Activated CD4-positive, alpha-beta T cell treated with anti-CD3 and anti-CD28 coated beads for 36 hours (primary cell): ENCODE measurements at regions of chr19 and their contacts with region 1.

Region 1: DNA sequence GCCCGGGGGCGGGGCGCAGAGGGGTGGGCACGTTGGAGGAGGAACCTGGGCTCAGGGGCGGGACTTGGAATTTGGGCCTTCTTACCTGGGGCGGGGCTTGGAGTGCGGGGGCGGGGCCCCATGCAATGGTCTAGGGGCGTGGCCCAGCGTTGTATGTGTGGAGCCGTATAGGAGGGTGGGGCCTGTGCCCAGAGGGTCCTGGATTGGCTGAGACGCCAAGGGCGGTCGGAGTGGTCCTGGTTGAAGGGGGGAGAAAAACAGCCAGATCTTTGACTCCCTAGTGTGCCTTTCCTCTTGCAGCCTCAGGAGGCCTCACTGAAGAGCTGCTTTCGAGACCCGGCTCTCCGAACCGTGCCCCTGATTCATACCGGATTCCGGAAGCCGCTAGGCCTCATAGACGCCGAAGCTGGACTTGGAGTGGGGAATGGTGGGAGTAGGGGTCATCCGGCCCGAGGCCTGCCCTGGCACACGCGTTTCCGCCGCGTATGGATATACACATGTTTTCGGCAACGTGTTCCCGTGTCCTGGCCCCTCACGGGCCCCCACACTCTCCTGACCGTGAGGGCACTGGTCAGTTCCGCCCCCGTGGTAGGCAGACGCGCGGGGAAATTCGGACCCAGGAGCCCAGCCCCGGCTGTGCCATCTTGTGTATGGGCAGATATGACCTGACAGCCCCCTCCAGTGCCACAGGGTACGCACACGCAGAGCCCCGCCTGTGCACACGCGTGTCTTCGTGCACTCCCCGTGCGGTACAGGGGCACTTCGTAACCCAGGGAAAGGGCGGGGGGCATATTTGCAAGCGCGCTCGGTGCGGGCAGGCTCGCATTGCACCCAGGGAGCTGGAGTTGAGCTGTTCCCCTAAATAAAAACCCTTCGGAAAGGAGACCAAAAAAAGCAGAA is 661 bp upstream of the PRR12 start:
- DNase-seq: peak; percentile 98
- ATAC-seq: peak; percentile 80
- H3K4me3 Mint-ChIP-seq: peak overlapping the region; percentile 79
- H3K27ac Mint-ChIP-seq: peak overlapping the region; percentile 84
- H3K4me1 Mint-ChIP-seq: peaks cover 28% of the 10 kb centered on the region
- H3K27me3 Mint-ChIP-seq: no peaks in the 10 kb centered on the region

Region 2: DNA sequence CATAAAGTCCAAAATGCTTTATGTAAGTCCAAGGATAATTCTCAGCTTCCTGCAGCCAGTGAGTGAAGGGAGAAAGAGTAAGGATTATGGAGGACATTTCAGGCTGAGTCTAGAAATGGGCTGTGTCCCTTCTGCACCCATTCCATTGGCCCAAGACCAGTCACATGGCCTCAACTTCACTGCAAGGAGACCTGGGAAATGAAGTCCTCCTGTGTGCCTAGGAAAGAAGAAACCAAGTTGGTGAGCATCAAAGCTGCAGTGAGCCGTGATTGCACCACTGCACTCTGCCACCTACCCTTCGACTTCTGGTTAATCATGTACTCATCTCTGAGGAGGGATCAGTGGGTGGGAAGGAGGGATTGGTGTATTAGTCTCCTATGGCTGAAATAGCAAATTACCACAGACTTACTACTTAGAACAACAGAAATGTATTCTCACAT is 258.7 kb before region 1 on chr19:
- CTCF ChIA-PET with region 1: no interaction called
- POLR2A ChIA-PET with region 1: no interaction called
- intact Hi-C with region 1: loop called in 1 of 2 experiments (anchors 5 kb)
- DNase-seq: peak; percentile 80
- ATAC-seq: peak; percentile 80
- H3K4me3 Mint-ChIP-seq: peak overlapping the region; percentile 33
- H3K27ac Mint-ChIP-seq: peak overlapping the region; percentile 75
- H3K4me1 Mint-ChIP-seq: peaks cover 81% of the 10 kb centered on the region
- H3K27me3 Mint-ChIP-seq: no peaks in the 10 kb centered on the region

Region 3: GRCh38 chr19:49555600-49556411 is 34.5 kb before region 1 on chr19:
- CTCF ChIA-PET with region 1: interaction called, 4 read pairs
- POLR2A ChIA-PET with region 1: interaction called, 4 read pairs
- intact Hi-C with region 1: loop called in 1 of 2 experiments (anchors 1 kb)
- DNase-seq: peak; percentile 92
- ATAC-seq: peak; percentile 62
- H3K4me3 Mint-ChIP-seq: peak overlapping the region; percentile 35
- H3K27ac Mint-ChIP-seq: peak overlapping the region; percentile 98
- H3K4me1 Mint-ChIP-seq: peaks cover 82% of the 10 kb centered on the region
- H3K27me3 Mint-ChIP-seq: no peaks in the 10 kb centered on the region

Region 4: DNA sequence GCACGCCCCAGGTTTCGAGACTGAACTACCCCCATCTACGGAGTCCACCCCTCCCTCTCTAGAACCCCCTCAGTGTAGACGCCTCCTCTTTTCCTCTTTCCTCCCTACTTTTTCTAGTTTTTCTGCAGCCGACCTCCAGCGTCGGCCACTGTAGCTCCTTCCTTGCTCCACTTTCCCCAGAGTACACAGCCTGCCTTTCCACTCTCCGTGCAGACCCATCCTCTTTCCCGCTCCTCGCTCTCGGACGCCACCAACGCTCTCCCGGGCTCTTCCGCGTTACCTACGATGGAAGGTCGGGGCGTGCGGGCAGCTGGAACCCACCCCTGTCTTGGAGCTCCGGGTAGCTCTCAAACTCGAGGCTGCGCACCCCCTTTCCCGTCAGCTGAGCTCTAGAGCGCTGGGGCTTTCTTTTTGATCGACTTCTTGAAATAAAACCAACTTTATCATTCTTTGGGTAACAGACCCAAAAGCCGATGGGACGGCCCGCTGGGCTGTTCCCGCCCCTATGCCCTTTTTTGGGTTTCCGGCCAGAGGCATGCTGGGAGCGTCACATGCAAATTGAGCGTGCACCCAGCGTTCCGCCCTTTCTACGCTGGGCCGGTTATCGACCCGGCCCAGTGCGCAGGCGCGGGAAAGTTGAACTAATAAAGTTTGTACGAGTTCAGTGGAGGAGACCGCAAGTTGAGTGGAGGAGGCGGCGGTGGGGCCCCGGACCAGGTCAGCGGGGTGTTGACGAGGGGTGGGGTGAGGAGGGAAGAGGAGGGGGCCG is 75.2 kb after region 1 on chr19 and contains the starts of genes BCL2L12 and IRF3:
- CTCF ChIA-PET with region 1: no interaction called
- POLR2A ChIA-PET with region 1: no interaction called
- intact Hi-C with region 1: loop called (anchors 1 to 2 kb)
- DNase-seq: peak; percentile 100
- ATAC-seq: peak; percentile 86
- H3K4me3 Mint-ChIP-seq: peak within 1 kb of the TSS; percentile 96
- H3K27ac Mint-ChIP-seq: peak within 1 kb of the TSS; percentile 92
- H3K4me1 Mint-ChIP-seq: peaks cover 29% of the 10 kb centered on the region
- H3K27me3 Mint-ChIP-seq: no peaks in the 10 kb centered on the region
- total RNA-seq, gene BCL2L12: 79.6 to 93.8 TPM
- total RNA-seq, gene IRF3: 123 to 125 TPM

Region 5: DNA sequence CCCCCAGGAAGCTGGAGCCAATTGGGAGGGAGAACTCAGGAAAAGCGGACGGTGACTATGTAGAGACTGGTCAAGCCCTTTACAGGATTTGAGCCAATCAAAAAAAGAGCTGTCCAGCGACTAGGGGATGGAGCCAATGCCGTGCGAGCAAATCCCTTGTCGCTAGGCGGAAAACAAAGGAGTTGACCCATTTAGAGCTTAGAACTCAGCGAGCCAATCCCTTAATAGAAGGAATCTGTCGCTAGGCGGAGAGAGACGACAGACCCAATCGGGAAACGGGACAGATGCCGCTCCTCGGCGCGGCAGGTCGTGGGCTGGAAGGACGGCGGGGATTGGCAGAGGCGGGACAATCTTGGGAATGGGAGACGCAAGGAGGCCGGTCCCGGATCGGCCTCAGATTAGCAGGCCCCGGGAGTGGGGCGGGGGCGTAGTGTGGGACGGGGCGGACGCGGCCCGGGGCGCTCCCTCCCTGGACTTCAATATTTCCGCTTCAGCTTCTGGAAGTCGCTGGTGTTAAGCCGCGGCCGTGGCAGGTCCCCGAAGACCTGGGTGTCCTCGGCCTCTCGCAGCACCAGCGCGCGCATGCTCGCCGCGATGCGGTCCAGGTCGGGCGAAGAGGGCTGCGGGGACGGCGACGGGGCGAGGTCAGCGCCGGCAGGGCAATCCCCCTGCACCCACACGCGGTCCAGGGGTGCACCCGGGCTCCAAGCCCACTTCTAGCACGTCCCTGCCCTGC is 279.3 kb after region 1 on chr19:
- CTCF ChIA-PET with region 1: no interaction called
- POLR2A ChIA-PET with region 1: no interaction called
- intact Hi-C with region 1: loop called (anchors 2 to 5 kb)
- DNase-seq: peak; percentile 94
- ATAC-seq: peak; percentile 87
- H3K4me3 Mint-ChIP-seq: no peak overlapping the region
- H3K27ac Mint-ChIP-seq: no peak overlapping the region
- H3K4me1 Mint-ChIP-seq: peaks cover 39% of the 10 kb centered on the region
- H3K27me3 Mint-ChIP-seq: no peaks in the 10 kb centered on the region